IMR-90 (cell line): ENCODE measurements at regions of chr9 and their contacts with region 1.

Region 1: DNA sequence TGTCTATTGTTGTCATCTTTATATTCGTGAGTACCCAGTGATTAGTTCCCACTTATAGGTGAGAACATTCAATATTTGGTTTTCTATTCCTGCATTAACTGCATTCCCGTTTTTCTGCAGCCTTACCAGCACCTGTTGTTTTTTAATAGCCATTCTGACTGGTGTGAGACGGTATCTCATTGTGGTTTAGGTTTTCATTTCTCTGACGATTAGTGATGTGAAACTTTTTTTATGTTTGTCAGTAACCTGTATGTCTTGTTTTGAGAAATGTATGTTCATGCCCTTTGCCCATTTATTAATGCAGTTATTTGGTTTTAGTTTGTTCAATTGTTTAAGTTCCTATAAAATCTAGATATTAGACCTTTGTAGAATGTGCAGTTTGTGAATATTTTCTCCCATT is 546.0 kb upstream of the RORB start:
- DNase-seq: no peak
- ATAC-seq: no peak
- H3K4me3 ChIP-seq: no peak overlapping the region
- H3K27ac ChIP-seq: no peak overlapping the region
- H3K4me1 ChIP-seq: no peaks in the 10 kb centered on the region
- H3K27me3 ChIP-seq: no peaks in the 10 kb centered on the region
- CTCF ChIP-seq: no peak
- POLR2A ChIP-seq: no peak
- RAD21 ChIP-seq: no peak

Region 2: GRCh38 chr9:73892335-73892734 is 58.8 kb before region 1 on chr9:
- CTCF ChIA-PET with region 1: no interaction called
- POLR2A ChIA-PET with region 1: no interaction called
- dilution Hi-C with region 1: no loop called
- in situ Hi-C with region 1: no loop called
- intact Hi-C with region 1: loop called (anchors 10 kb)
- DNase-seq: no peak
- ATAC-seq: no peak
- H3K4me3 ChIP-seq: no peak overlapping the region
- H3K27ac ChIP-seq: no peak overlapping the region
- H3K4me1 ChIP-seq: no peaks in the 10 kb centered on the region
- H3K27me3 ChIP-seq: no peaks in the 10 kb centered on the region
- CTCF ChIP-seq: no peak
- POLR2A ChIP-seq: no peak
- RAD21 ChIP-seq: no peak

Region 3: DNA sequence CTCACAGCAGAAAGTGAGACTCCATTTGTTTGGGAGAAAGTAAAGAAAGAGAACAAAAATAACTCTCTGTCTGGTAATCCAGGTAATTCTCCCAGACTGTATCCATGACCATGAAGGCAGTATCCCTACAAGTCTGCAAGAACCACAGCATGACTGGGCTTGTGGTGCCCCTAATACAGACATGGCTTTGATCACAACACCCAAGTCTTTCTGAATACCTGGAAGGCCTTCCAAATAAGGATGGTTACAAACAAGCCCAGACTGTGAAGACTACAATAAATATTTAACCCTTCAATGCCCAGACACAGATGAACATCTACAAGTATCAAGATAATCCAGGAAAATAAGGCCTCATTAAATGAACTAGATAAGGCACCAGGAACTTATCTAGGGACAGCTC is 64.9 kb after region 1 on chr9:
- CTCF ChIA-PET with region 1: no interaction called
- POLR2A ChIA-PET with region 1: no interaction called
- dilution Hi-C with region 1: no loop called
- in situ Hi-C with region 1: no loop called
- intact Hi-C with region 1: loop called (anchors 10 kb)
- DNase-seq: no peak
- ATAC-seq: no peak
- H3K4me3 ChIP-seq: no peak overlapping the region
- H3K27ac ChIP-seq: no peak overlapping the region
- H3K4me1 ChIP-seq: no peaks in the 10 kb centered on the region
- H3K27me3 ChIP-seq: no peaks in the 10 kb centered on the region
- CTCF ChIP-seq: no peak
- POLR2A ChIP-seq: no peak
- RAD21 ChIP-seq: no peak